ENCODE measurements at regions of chr5 and their contacts with region 1.

Region 1: GRCh38 chr5:42057254-42057690 is 132.2 kb downstream of the FBXO4 start:
- DNase-seq: peak; percentile 46 to 60
- H3K4me3 ChIP-seq: no peak overlapping the region
- H3K27ac ChIP-seq: no peak overlapping the region
- H3K4me1 ChIP-seq: no peaks in the 10 kb centered on the region
- H3K27me3 ChIP-seq: no peaks in the 10 kb centered on the region
- CTCF ChIP-seq: peak; percentile 97

Region 2: DNA sequence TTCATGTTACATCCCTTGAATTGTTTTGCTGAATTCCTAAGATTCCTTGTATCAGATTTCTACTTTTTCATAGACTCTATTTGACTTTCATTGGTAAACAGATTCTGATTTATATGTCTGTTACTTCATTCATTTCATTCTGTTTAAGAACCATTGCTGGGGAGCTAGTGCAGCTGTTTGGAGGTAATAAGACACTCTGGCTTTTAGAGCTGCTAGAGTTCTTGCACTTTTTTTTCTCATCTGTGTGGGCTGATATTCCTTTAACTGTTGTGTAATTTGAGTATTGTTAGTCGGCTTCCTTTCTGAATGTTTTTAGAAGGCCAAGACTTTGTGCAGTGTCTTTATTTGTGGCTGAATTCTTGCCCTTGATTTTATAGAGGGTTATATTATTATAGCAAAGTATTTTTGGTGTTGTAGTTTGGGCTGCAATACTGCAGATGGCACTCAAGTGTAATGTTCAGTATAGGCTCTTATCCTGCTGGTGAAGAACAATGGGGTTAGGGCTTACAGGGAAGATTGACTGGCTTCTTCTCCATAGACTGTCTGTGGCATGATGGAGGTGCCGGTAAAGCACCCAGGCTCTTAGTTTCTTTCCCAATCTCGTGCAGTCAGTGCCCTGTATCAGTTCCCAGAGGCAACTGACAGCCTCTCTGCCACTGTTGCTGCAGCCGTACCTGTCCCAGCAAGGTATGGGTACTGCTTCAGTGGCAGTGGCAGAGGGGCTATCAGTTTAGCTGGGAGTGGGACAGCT is 349.2 kb before region 1 on chr5:
- CTCF ChIA-PET with region 1: no interaction called
- POLR2A ChIA-PET with region 1: no interaction called
- intact Hi-C with region 1: loop called (anchors 5 kb)
- DNase-seq: no peak
- H3K4me3 ChIP-seq: no peak overlapping the region
- H3K27ac ChIP-seq: no peak overlapping the region
- H3K4me1 ChIP-seq: no peaks in the 10 kb centered on the region
- H3K27me3 ChIP-seq: no peaks in the 10 kb centered on the region
- CTCF ChIP-seq: peak; percentile 66

Measured in PC-9 (cell line).